ENCODE measurements at regions of chr9 and their contacts with region 1.

Region 1: GRCh38 chr9:79817438-79818004 is 245.8 kb downstream of the TLE4 start:
- DNase-seq: peak; percentile 29
- ATAC-seq: peak; percentile 85
- H3K4me3 Mint-ChIP-seq: no peak overlapping the region
- H3K27ac Mint-ChIP-seq: no peak overlapping the region
- H3K4me1 Mint-ChIP-seq: peaks cover 14% of the 10 kb centered on the region
- H3K27me3 Mint-ChIP-seq: peaks cover 6% of the 10 kb centered on the region

Region 2: DNA sequence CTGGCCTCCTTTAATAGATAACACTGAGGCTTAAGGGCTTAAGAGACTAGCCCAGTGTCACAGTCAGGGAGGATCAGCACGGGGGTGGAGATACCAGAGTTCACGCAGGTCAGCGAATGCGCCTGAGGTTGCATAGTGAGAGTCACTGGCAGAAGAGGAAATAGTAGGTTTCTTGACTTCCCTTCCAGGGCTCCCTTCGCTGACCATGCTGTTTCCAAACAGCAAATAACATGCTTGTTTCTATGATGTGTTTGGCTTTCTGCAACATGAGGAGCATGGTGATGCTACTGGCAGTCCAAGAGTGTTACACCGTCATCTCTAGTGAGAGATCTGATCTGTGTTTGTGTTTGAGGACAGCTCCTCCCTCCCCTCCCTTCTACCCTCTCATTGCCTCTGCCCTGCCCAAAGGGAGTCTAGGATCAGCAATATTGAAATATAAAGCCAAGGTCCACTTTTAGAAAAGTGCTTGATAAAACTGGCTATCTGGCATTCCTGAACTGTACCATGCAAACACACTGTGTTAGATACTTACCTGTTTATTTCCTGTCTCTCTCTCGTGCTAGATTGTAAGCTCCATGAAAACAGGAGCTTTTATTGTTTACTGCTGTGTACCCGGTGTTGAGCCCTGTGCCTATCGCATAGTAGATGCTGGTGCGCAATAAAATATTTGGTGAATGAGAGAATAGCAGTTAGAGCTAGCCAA is 233.4 kb before region 1 on chr9:
- CTCF ChIA-PET with region 1: no interaction called
- POLR2A ChIA-PET with region 1: no interaction called
- intact Hi-C with region 1: no loop called
- DNase-seq: peak; percentile 68
- ATAC-seq: peak; percentile 86
- H3K4me3 Mint-ChIP-seq: peak overlapping the region; percentile 24
- H3K27ac Mint-ChIP-seq: peak overlapping the region; percentile 30
- H3K4me1 Mint-ChIP-seq: peaks cover 67% of the 10 kb centered on the region
- H3K27me3 Mint-ChIP-seq: no peaks in the 10 kb centered on the region

Region 3: GRCh38 chr9:79623799-79624721 is 193.5 kb before region 1 on chr9:
- CTCF ChIA-PET with region 1: no interaction called
- POLR2A ChIA-PET with region 1: no interaction called
- intact Hi-C with region 1: loop called in 1 of 2 experiments (anchors 5 kb)
- DNase-seq: peak; percentile 41
- ATAC-seq: peak; percentile 88
- H3K4me3 Mint-ChIP-seq: peak overlapping the region; percentile 0
- H3K27ac Mint-ChIP-seq: peak overlapping the region; percentile 84
- H3K4me1 Mint-ChIP-seq: peaks cover 34% of the 10 kb centered on the region
- H3K27me3 Mint-ChIP-seq: no peaks in the 10 kb centered on the region

Region 4: DNA sequence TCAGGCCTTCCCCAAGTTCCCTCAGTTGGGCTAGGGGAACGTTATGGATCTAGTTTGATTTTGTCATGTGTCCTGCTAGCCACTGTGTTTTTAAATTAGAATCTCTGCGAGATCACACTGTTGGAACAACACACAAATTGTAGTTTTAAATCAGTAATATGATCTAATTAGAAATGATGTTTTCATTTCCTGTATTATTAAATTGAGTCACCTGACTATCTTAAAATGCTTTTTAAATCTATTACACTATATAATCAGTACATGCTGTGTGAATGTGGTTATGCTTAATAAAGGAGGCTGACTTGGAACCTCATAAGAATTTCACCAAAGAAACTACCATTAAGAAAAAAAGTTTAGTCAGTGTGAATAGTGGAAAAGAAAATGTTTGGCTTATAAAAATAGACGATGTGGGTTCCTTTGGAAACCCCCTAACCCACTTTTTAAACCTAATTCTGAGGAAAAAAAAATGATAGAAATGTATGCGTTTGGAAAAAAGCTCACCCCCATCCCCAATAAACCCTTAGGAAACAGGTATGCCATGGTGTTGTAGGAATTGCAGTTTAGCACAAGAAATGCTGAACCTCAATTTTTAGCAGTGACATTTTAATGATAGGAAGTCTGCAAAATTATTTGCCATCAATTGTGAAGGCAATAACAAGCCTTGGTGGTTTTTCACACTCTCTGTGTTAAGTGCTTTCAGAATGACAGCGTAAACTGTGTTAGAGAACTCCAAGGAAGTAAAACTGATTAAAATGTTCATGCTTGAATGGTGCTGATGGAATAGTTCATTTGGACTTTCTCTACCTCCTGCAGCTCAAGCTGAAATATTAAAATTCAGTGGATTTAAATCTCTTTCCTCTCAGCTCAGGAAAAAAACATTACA is 186.8 kb before region 1 on chr9:
- CTCF ChIA-PET with region 1: no interaction called
- POLR2A ChIA-PET with region 1: no interaction called
- intact Hi-C with region 1: loop called in 1 of 2 experiments (anchors 2 kb)
- DNase-seq: no peak
- ATAC-seq: peak; percentile 82
- H3K4me3 Mint-ChIP-seq: no peak overlapping the region
- H3K27ac Mint-ChIP-seq: peak overlapping the region; percentile 34
- H3K4me1 Mint-ChIP-seq: peaks cover 60% of the 10 kb centered on the region
- H3K27me3 Mint-ChIP-seq: no peaks in the 10 kb centered on the region

Region 5: GRCh38 chr9:79694676-79695400 is 122.7 kb before region 1 on chr9:
- CTCF ChIA-PET with region 1: no interaction called
- POLR2A ChIA-PET with region 1: no interaction called
- intact Hi-C with region 1: loop called in 1 of 2 experiments (anchors 10 kb)
- DNase-seq: no peak
- ATAC-seq: peak; percentile 23
- H3K4me3 Mint-ChIP-seq: no peak overlapping the region
- H3K27ac Mint-ChIP-seq: no peak overlapping the region
- H3K4me1 Mint-ChIP-seq: peaks cover 43% of the 10 kb centered on the region
- H3K27me3 Mint-ChIP-seq: no peaks in the 10 kb centered on the region

Region 6: GRCh38 chr9:79757881-79758669 is 59.4 kb before region 1 on chr9:
- CTCF ChIA-PET with region 1: no interaction called
- POLR2A ChIA-PET with region 1: no interaction called
- intact Hi-C with region 1: loop called in 1 of 2 experiments (anchors 10 kb)
- DNase-seq: no peak
- ATAC-seq: no peak
- H3K4me3 Mint-ChIP-seq: no peak overlapping the region
- H3K27ac Mint-ChIP-seq: no peak overlapping the region
- H3K4me1 Mint-ChIP-seq: peaks cover 5% of the 10 kb centered on the region
- H3K27me3 Mint-ChIP-seq: no peaks in the 10 kb centered on the region

Measured in activated CD4-positive, alpha-beta T cell treated with anti-CD3 and anti-CD28 coated beads for 36 hours (primary cell).